ENCODE measurements at regions of chr22 and their contacts with region 1.

Region 1: DNA sequence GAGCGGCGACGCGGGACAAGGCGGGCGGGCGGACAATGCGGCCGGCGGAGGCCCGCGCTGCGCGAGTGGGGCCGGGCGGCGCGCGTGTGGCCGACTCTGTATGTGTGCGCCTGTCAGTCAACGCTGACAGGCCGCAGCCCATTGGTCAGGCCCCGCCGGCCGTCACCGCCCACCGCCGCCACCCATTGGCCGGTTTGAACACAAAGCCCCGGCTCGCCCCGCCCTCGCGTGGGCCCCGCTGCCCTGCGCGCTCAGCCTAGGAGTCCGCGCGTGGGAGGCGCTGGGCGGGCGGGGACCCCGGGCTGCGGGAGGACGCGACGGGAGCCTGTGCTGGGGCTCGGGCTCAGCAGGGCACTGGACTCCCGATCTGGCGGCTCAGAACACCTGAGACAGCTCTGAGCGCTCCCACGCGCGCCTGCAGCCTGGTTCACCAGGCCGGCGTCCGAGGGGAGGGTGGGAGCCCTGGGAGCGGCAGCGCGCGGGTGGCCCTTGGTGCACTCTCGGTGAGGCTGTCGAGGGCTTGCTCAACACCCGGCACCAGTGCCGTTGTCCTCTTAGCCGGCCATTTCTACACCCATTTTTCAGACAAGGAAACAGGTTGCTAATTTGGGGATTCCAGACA is at the start of gene SUN2:
- DNase-seq: peak; percentile 91 to 96 (median 95)
- H3K4me3 ChIP-seq: peak within 1 kb of the TSS; percentile 98
- H3K4me3 Mint-ChIP-seq: peak within 1 kb of the TSS; percentile 93 to 100 (median 99)
- H3K27ac ChIP-seq: peak within 1 kb of the TSS; percentile 70
- H3K27ac Mint-ChIP-seq: peak within 1 kb of the TSS; percentile 81 to 100 (median 98)
- H3K4me1 ChIP-seq: peaks cover 57% of the 10 kb centered on the region
- H3K4me1 Mint-ChIP-seq: peaks cover 59 to 65% (median 63%) of the 10 kb centered on the region in 3 donors
- H3K27me3 ChIP-seq: no peaks in the 10 kb centered on the region
- H3K27me3 Mint-ChIP-seq: peaks cover 0 to 8% of the 10 kb centered on the region in 2 donors
- total RNA-seq, gene SUN2: 168 to 185 TPM

Region 2: DNA sequence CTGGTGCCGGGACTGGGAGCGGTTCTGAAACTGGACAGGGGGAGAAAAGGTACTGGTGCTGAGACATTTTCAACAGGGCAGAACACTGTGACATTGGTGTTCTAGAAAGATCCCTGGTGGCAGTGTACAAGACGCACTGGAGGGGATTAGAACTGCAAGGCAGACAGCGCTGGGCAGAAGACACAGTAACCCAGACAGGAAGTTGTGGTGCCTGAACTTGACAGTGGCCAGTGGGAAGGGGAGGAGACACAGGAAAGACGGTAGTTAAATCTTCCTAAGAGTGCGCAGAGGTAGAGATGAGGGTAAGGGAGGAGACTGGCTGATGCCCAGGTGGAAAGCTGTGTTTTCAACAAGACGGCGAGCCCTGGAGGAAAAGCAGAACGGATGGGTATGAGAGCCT is 124.3 kb before region 1 on chr22:
- CTCF ChIA-PET with region 1: no interaction called
- POLR2A ChIA-PET with region 1: no interaction called
- DNase-seq: peak in 1 of 5 donors; percentile 7
- H3K4me3 ChIP-seq: no peak overlapping the region
- H3K4me3 Mint-ChIP-seq: peak overlapping the region in 1 of 7 donors; percentile 42
- H3K27ac ChIP-seq: no peak overlapping the region
- H3K27ac Mint-ChIP-seq: no peak overlapping the region
- H3K4me1 ChIP-seq: peaks cover 7% of the 10 kb centered on the region
- H3K4me1 Mint-ChIP-seq: peaks cover 7 to 11% (median 10%) of the 10 kb centered on the region in 3 donors
- H3K27me3 ChIP-seq: peaks cover 4% of the 10 kb centered on the region
- H3K27me3 Mint-ChIP-seq: peaks cover 0 to 9% of the 10 kb centered on the region in 2 donors

Region 3: GRCh38 chr22:38705235-38706100 is 50.6 kb before region 1 on chr22 and contains the start of gene GTPBP1:
- CTCF ChIA-PET with region 1: interaction called, 3 read pairs
- POLR2A ChIA-PET with region 1: interaction called, 36 read pairs
- DNase-seq: peak; percentile 94 to 99 (median 98)
- H3K4me3 ChIP-seq: peak within 1 kb of the TSS; percentile 82
- H3K4me3 Mint-ChIP-seq: peak within 1 kb of the TSS; percentile 91 to 95 (median 93)
- H3K27ac ChIP-seq: peak within 1 kb of the TSS; percentile 74
- H3K27ac Mint-ChIP-seq: peak within 1 kb of the TSS; percentile 89 to 100 (median 98)
- H3K4me1 ChIP-seq: peaks cover 48% of the 10 kb centered on the region
- H3K4me1 Mint-ChIP-seq: peaks cover 55 to 69% (median 60%) of the 10 kb centered on the region in 3 donors
- H3K27me3 ChIP-seq: no peaks in the 10 kb centered on the region
- H3K27me3 Mint-ChIP-seq: peaks cover 0 to 5% of the 10 kb centered on the region in 2 donors
- total RNA-seq, gene GTPBP1: 62.7 to 63.7 TPM

Region 4: GRCh38 chr22:38744981-38745380 is 11.0 kb before region 1 on chr22:
- CTCF ChIA-PET with region 1: interaction called, 9 read pairs
- POLR2A ChIA-PET with region 1: interaction called, 275 read pairs
- DNase-seq: no peak
- H3K4me3 ChIP-seq: no peak overlapping the region
- H3K4me3 Mint-ChIP-seq: peak overlapping the region in 1 of 7 donors; percentile 24
- H3K27ac ChIP-seq: no peak overlapping the region
- H3K27ac Mint-ChIP-seq: peak overlapping the region in 7 of 8 donors; percentile 29 to 88 (median 70)
- H3K4me1 ChIP-seq: peaks cover 50% of the 10 kb centered on the region
- H3K4me1 Mint-ChIP-seq: peaks cover 32 to 75% (median 32%) of the 10 kb centered on the region in 3 donors
- H3K27me3 ChIP-seq: no peaks in the 10 kb centered on the region
- H3K27me3 Mint-ChIP-seq: no peaks in the 10 kb centered on the region

Region 5: DNA sequence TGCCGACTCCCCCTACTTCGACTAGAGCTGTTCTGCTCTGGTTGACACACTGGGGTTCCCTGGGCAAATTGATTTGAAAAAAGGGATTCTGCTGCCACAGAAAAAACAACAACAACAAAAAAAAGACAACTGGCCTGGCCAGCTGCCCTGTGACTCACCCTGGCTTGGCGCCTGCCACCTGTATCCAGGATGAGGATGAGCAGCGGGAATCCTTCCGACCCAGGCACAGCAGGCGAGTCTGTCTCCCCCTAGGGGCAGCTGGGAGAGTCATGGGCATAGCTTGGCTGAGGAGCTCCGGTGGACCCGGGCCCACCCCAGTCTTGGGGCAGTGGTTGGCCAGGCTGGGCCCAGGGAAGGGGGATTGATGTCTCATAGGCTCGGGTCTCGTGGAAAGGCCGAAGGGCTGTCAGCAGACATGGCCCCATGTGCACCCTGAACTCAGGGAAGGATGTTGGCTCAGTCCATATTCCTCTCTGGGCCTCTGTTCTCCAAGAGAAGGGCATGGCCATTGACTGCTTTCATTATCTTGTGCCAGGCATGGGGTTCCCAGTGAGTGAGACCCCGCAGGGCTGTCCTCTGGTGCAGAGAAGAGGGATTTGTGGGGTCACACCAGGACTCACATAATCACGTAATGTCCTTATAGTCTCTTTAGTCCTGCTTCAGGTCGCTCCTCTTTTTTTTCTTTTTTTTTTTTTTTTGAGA is 10.2 kb after region 1 on chr22:
- CTCF ChIA-PET with region 1: interaction called, 41 read pairs
- POLR2A ChIA-PET with region 1: interaction called, 12 read pairs
- DNase-seq: peak; percentile 19 to 69 (median 41)
- H3K4me3 ChIP-seq: no peak overlapping the region
- H3K4me3 Mint-ChIP-seq: no peak overlapping the region
- H3K27ac ChIP-seq: no peak overlapping the region
- H3K27ac Mint-ChIP-seq: no peak overlapping the region
- H3K4me1 ChIP-seq: peaks cover 9% of the 10 kb centered on the region
- H3K4me1 Mint-ChIP-seq: peaks cover 4 to 14% (median 6%) of the 10 kb centered on the region in 3 donors
- H3K27me3 ChIP-seq: no peaks in the 10 kb centered on the region
- H3K27me3 Mint-ChIP-seq: peaks cover 0 to under 1% of the 10 kb centered on the region in 2 donors

Region 6: GRCh38 chr22:38843201-38843715 is 87.2 kb after region 1 on chr22:
- CTCF ChIA-PET with region 1: interaction called, 10 read pairs
- POLR2A ChIA-PET with region 1: interaction called, 14 read pairs
- DNase-seq: peak; percentile 18 to 78 (median 58)
- H3K4me3 ChIP-seq: peak overlapping the region; percentile 43
- H3K4me3 Mint-ChIP-seq: peak overlapping the region in 2 of 7 donors; percentile 31 to 84
- H3K27ac ChIP-seq: no peak overlapping the region
- H3K27ac Mint-ChIP-seq: no peak overlapping the region
- H3K4me1 ChIP-seq: peaks cover 20% of the 10 kb centered on the region
- H3K4me1 Mint-ChIP-seq: peaks cover 21 to 38% (median 34%) of the 10 kb centered on the region in 3 donors
- H3K27me3 ChIP-seq: no peaks in the 10 kb centered on the region
- H3K27me3 Mint-ChIP-seq: peaks cover 7 to 9% of the 10 kb centered on the region in 2 donors